ENCODE measurements at regions of chr2 and their contacts with region 1.

Region 1: DNA sequence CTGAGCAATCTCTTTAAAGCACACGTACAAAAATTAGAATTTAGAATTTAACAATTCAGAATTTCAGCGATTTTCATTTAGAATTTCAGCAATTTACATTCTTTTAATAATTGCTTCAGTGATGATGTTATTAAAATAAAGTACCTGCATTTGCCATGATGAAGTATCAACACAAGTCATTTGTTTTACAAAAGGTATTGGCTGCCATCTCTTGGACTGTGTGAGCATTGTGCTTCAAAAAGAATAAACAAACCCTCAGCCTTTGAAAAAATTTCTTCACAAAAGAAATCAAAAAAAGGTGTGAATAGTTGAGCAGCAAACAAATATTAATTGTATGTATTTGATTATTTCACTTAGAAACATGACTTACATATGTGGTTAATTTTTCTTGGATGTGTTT is 27.1 kb upstream of the ZC3H15 start:
- DNase-seq: peak; percentile 68
- ATAC-seq: peak; percentile 50
- H3K4me3 ChIP-seq: no peak overlapping the region
- H3K27ac ChIP-seq: no peak overlapping the region
- H3K4me1 ChIP-seq: peaks cover 16% of the 10 kb centered on the region
- H3K27me3 ChIP-seq: no peaks in the 10 kb centered on the region
- CTCF ChIP-seq: peak; percentile 75

Region 2: DNA sequence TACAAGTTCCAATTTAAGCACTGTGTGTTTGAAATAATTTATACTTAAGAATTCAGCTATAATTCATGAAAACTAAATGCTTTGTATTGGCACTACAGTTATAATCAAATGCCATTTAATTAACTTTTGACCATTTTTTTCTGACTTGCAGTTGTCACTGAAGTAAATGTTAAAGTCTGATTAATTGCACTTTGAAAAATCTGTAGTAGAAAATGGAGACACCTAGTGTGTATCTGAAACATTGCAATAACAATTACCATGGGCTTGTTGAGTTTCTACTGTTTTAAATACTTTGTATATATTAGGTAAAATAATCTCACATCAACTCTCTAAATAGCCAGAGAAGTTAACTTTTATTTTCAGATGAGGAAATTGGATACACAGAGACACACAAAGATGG is 1179.0 kb before region 1 on chr2:
- CTCF ChIA-PET with region 1: no interaction called
- POLR2A ChIA-PET with region 1: no interaction called
- intact Hi-C with region 1: loop called (anchors 10 kb)
- DNase-seq: peak; percentile 57
- ATAC-seq: no peak
- H3K4me3 ChIP-seq: no peak overlapping the region
- H3K27ac ChIP-seq: no peak overlapping the region
- H3K4me1 ChIP-seq: 0 out of 2 replicates have a peak, but pooled peaks cover 4% of the 10 kb centered on the region
- H3K27me3 ChIP-seq: no peaks in the 10 kb centered on the region
- CTCF ChIP-seq: peak; percentile 78

Region 3: DNA sequence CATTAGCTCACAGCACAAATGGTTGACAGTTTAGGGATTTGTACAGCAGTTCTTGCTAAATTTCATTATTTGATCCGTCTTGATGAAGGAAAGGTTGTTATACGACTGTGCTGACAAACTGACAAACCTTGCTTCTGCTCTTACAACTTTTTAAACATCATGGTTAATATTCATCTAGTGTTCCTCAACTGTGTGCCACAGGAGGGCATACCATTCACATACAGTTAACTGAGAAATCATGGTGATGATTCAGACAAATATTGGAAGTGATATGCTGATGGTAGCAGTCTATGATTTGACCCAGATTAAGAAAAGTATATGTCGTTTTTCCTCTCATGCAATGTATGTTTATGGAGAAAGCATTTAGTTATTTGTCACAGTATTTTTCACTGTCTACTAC is 850.2 kb before region 1 on chr2:
- CTCF ChIA-PET with region 1: no interaction called
- POLR2A ChIA-PET with region 1: no interaction called
- intact Hi-C with region 1: loop called (anchors 1 kb)
- DNase-seq: peak; percentile 71
- ATAC-seq: peak; percentile 64
- H3K4me3 ChIP-seq: no peak overlapping the region
- H3K27ac ChIP-seq: no peak overlapping the region
- H3K4me1 ChIP-seq: peaks cover 3% of the 10 kb centered on the region; the same call in 1 of the 2 replicates
- H3K27me3 ChIP-seq: no peaks in the 10 kb centered on the region
- CTCF ChIP-seq: peak; percentile 72

Measured in PC-3 (cell line).